ENCODE measurements at regions of chr1 and their contacts with region 1.

Region 1: GRCh38 chr1:31065310-31066217 is at the start of gene PUM1:
- DNase-seq: peak; percentile 98
- total RNA-seq, gene PUM1: 73.2 to 87.9 TPM

Region 2: GRCh38 chr1:31122101-31122735 is 56.7 kb after region 1 on chr1:
- intact Hi-C with region 1: loop called in 1 of 2 experiments (anchors 2 kb)
- DNase-seq: no peak

Measured in posterior vena cava (tissue), 2 donors.